ENCODE measurements at regions of chr21 and their contacts with region 1.

Region 1: GRCh38 chr21:46323227-46324128 is at the start of gene C21orf58:
- DNase-seq: peak; percentile 99
- H3K4me3 ChIP-seq: peak within 1 kb of the TSS; percentile 95 to 99 (median 98)
- H3K27ac ChIP-seq: peak within 1 kb of the TSS; percentile 98 to 100 (median 99)
- H3K4me1 ChIP-seq: peaks cover 20 to 31% (median 28%) of the 10 kb centered on the region in 4 donors
- H3K27me3 ChIP-seq: no peaks in the 10 kb centered on the region
- CTCF ChIP-seq: no peak
- EP300 ChIP-seq: no peak
- POLR2A ChIP-seq: no peak
- total RNA-seq, gene C21orf58: 0.50 to 2.5 (median 1.7) TPM

Region 2: DNA sequence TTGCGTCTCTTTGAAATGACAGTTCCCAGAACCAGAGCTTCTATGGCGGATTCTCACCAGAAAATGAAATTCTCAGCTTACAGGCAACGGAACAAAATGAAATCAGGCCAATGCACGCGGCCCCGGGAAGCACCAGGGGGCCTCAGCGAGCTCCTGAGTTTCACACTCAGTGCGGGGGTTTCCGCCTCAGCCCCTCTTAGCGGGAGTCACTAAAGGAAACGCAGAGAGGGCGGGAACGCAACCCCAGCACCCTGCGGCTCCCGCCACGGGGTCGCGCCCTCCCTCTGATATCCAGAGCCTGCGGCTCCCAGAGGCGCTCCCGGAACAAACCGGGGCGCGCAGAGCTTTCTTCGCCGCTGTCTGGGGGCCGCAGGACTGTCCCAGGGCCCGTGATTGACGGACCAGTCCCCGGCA is 349.8 kb before region 1 on chr21:
- intact Hi-C with region 1: loop called (anchors 10 kb)
- DNase-seq: no peak
- H3K4me3 ChIP-seq: peak overlapping the region; percentile 59 to 62 (median 61)
- H3K27ac ChIP-seq: peak overlapping the region; percentile 96 to 99 (median 98)
- H3K4me1 ChIP-seq: peaks cover 64 to 86% (median 80%) of the 10 kb centered on the region in 4 donors
- H3K27me3 ChIP-seq: no peaks in the 10 kb centered on the region
- CTCF ChIP-seq: peak; percentile 69 to 82 (median 78)
- EP300 ChIP-seq: no peak
- POLR2A ChIP-seq: no peak

Region 3: DNA sequence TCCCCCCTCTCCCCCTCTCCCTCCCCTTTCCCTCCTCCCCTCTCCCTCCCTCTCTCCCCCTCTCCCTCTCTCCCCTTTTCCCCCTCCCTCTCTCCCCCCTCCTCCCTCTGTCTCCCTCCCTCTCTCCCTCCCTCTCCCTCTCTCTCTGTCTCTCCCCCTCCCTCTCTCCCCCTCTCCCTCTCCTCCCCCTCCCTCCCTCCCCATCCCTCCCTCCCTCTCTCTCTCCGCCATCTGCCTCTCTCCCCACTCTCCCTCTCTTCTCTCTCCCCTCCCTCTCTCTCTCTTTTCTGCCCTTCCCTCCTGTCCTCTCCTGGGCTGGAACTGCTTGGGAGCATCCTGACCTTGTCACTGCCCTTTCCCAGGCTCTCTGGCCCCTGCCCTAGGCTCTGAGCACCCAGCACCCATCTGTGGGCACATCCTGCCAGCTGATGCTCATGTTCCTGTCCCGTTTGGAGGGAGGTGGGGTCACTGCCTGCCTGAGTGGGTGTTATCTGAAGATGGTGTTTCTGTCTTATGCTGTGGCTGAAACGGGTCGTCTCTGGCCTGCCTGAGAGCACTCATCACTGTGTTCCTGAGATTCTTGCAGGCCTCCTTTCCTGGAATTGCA is 178.9 kb before region 1 on chr21:
- intact Hi-C with region 1: loop called (anchors 5 kb)
- DNase-seq: no peak
- H3K4me3 ChIP-seq: no peak overlapping the region
- H3K27ac ChIP-seq: peak overlapping the region in 1 of 4 donors; percentile 14
- H3K4me1 ChIP-seq: peaks cover 0 to 13% (median 8%) of the 10 kb centered on the region in 4 donors
- H3K27me3 ChIP-seq: peaks cover 0 to 9% (median 0%) of the 10 kb centered on the region in 4 donors
- CTCF ChIP-seq: no peak
- EP300 ChIP-seq: no peak
- POLR2A ChIP-seq: no peak

Region 4: GRCh38 chr21:46228345-46229051 is 95.0 kb before region 1 on chr21 and contains the start of gene LSS:
- intact Hi-C with region 1: loop called (anchors 2 kb)
- DNase-seq: peak; percentile 98
- H3K4me3 ChIP-seq: peak within 1 kb of the TSS; percentile 78 to 96 (median 88)
- H3K27ac ChIP-seq: peak within 1 kb of the TSS; percentile 88 to 90 (median 89)
- H3K4me1 ChIP-seq: peaks cover 25 to 50% (median 44%) of the 10 kb centered on the region in 4 donors
- H3K27me3 ChIP-seq: no peaks in the 10 kb centered on the region
- CTCF ChIP-seq: no peak
- EP300 ChIP-seq: no peak
- POLR2A ChIP-seq: peak; percentile 50
- total RNA-seq, gene LSS: 45.3 to 66.3 (median 53.1) TPM

Region 5: GRCh38 chr21:46285761-46286496 is 37.5 kb before region 1 on chr21 and contains the start of gene YBEY:
- intact Hi-C with region 1: loop called (anchors 2 kb)
- DNase-seq: peak; percentile 95
- H3K4me3 ChIP-seq: peak within 1 kb of the TSS; percentile 82 to 99 (median 95)
- H3K27ac ChIP-seq: peak within 1 kb of the TSS; percentile 90 to 99 (median 98)
- H3K4me1 ChIP-seq: peaks cover 40 to 60% (median 56%) of the 10 kb centered on the region in 4 donors
- H3K27me3 ChIP-seq: no peaks in the 10 kb centered on the region
- CTCF ChIP-seq: peak; percentile 31 to 52 (median 43)
- EP300 ChIP-seq: no peak
- POLR2A ChIP-seq: peak; percentile 35
- total RNA-seq, gene YBEY: 8.1 to 17.2 (median 10.6) TPM

Region 6: GRCh38 chr21:46458315-46459023 is 135.0 kb after region 1 on chr21 and contains the start of gene DIP2A:
- intact Hi-C with region 1: loop called (anchors 10 kb)
- DNase-seq: peak; percentile 98
- H3K4me3 ChIP-seq: peak within 1 kb of the TSS; percentile 88 to 100 (median 96)
- H3K27ac ChIP-seq: peak within 1 kb of the TSS; percentile 89 to 94 (median 91)
- H3K4me1 ChIP-seq: peaks cover 61 to 83% (median 69%) of the 10 kb centered on the region in 4 donors
- H3K27me3 ChIP-seq: no peaks in the 10 kb centered on the region
- CTCF ChIP-seq: peak in 2 of 3 experiments; percentile 2 to 10
- EP300 ChIP-seq: no peak
- POLR2A ChIP-seq: peak; percentile 62
- total RNA-seq, gene DIP2A: 19.2 to 33.4 (median 28.7) TPM